CD8-positive, alpha-beta T cell (primary cell): ENCODE measurements at regions of chr3 and their contacts with region 1.

Region 1: GRCh38 chr3:44761424-44762169 is at the starts of genes KIAA1143 and KIF15:
- DNase-seq: peak; percentile 92 to 99 (median 98)
- ATAC-seq: peak; percentile 97
- H3K4me3 ChIP-seq: peak within 1 kb of the TSS; percentile 74 to 77
- H3K4me3 Mint-ChIP-seq: peak within 1 kb of the TSS; percentile 93
- H3K27ac ChIP-seq: peak within 1 kb of the TSS; percentile 78 to 81
- H3K27ac Mint-ChIP-seq: peak within 1 kb of the TSS; percentile 92
- H3K4me1 ChIP-seq: peaks cover 9% of the 10 kb centered on the region
- H3K4me1 Mint-ChIP-seq: peaks cover 40% of the 10 kb centered on the region
- H3K27me3 ChIP-seq: no peaks in the 10 kb centered on the region
- H3K27me3 Mint-ChIP-seq: peaks cover 3% of the 10 kb centered on the region
- CTCF ChIP-seq: no peak
- total RNA-seq, gene KIAA1143: 29.7 to 30.3 TPM
- total RNA-seq, gene KIF15: 0.24 to 0.64 TPM

Region 2: GRCh38 chr3:44477312-44478030 is 284.1 kb before region 1 on chr3 and contains the start of gene ZNF445:
- CTCF ChIA-PET with region 1: no interaction called
- POLR2A ChIA-PET with region 1: no interaction called
- intact Hi-C with region 1: loop called (anchors 1 to 10 kb)
- DNase-seq: peak; percentile 46 to 89 (median 73)
- ATAC-seq: peak; percentile 87
- H3K4me3 ChIP-seq: peak within 1 kb of the TSS; percentile 48 to 62
- H3K4me3 Mint-ChIP-seq: peak within 1 kb of the TSS; percentile 95
- H3K27ac ChIP-seq: peak within 1 kb of the TSS; percentile 8 to 16
- H3K27ac Mint-ChIP-seq: peak within 1 kb of the TSS; percentile 87
- H3K4me1 ChIP-seq: peaks cover 16% of the 10 kb centered on the region
- H3K4me1 Mint-ChIP-seq: peaks cover 42% of the 10 kb centered on the region
- H3K27me3 ChIP-seq: no peaks in the 10 kb centered on the region
- H3K27me3 Mint-ChIP-seq: no peaks in the 10 kb centered on the region
- CTCF ChIP-seq: no peak
- total RNA-seq, gene ZNF445: 4.8 to 5.2 TPM

Region 3: DNA sequence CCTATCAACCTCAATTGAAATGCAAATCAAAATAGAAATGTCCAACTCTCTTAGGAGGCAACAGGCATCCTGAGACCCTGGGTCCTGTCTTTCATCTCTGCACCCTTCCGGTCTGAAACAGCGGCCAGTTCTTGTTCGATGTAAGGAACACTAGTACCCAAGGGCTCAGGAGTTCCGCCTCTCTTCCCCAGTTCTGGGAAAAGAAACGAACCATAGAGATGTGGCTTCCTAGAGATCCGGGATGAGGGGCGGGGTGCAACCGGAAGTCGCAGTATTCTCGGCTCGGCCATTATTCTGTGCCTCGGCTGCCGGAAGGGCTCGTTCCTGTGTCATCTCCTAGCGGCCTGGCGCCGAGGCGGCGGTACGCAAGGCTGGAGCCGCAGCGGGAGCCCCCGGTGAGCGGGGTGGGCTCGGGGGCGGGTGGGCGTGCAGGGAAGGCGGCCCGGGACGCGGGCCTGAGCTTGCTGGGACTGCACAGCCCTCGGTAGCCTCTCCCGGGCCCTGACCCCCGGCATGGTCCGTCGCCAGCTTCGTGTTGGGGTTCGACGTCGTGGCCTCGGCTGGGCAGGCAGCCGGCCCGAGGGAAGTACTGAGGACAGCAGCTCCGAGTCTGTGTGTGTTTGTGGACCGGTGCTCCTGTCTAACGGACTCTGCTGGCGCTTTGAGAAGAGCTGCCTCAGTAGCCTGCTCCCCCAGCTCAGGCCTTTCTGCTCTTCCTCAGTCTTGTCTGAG is 136.7 kb before region 1 on chr3 and contains the start of gene ZNF197:
- CTCF ChIA-PET with region 1: no interaction called
- POLR2A ChIA-PET with region 1: interaction called, 5 read pairs
- intact Hi-C with region 1: loop called in 1 of 2 experiments (anchors 1 kb)
- DNase-seq: peak in 8 of 9 experiments; percentile 42 to 76 (median 55)
- ATAC-seq: peak; percentile 76
- H3K4me3 ChIP-seq: peak within 1 kb of the TSS; percentile 66 to 70
- H3K4me3 Mint-ChIP-seq: peak within 1 kb of the TSS; percentile 88
- H3K27ac ChIP-seq: peak within 1 kb of the TSS; percentile 49 to 60
- H3K27ac Mint-ChIP-seq: peak within 1 kb of the TSS; percentile 80
- H3K4me1 ChIP-seq: peaks cover 13% of the 10 kb centered on the region
- H3K4me1 Mint-ChIP-seq: peaks cover 46% of the 10 kb centered on the region
- H3K27me3 ChIP-seq: no peaks in the 10 kb centered on the region
- H3K27me3 Mint-ChIP-seq: no peaks in the 10 kb centered on the region
- CTCF ChIP-seq: no peak
- total RNA-seq, gene ZNF197: 2.9 to 3.5 TPM

Region 4: GRCh38 chr3:44729384-44729910 is 32.1 kb before region 1 on chr3 and contains the start of gene ZNF501:
- CTCF ChIA-PET with region 1: interaction called, 11 read pairs
- POLR2A ChIA-PET with region 1: interaction called, 18 read pairs
- intact Hi-C with region 1: loop called (anchors 1 kb)
- DNase-seq: peak; percentile 64 to 92 (median 87)
- ATAC-seq: peak; percentile 93
- H3K4me3 ChIP-seq: peak within 1 kb of the TSS; percentile 67 to 83
- H3K4me3 Mint-ChIP-seq: peak within 1 kb of the TSS; percentile 91
- H3K27ac ChIP-seq: peak within 1 kb of the TSS; percentile 41 to 62
- H3K27ac Mint-ChIP-seq: peak within 1 kb of the TSS; percentile 82
- H3K4me1 ChIP-seq: peaks cover 6% of the 10 kb centered on the region
- H3K4me1 Mint-ChIP-seq: peaks cover 14% of the 10 kb centered on the region
- H3K27me3 ChIP-seq: no peaks in the 10 kb centered on the region
- H3K27me3 Mint-ChIP-seq: no peaks in the 10 kb centered on the region
- CTCF ChIP-seq: no peak
- total RNA-seq, gene ZNF501: 0.75 to 0.87 TPM

Region 5: GRCh38 chr3:44893097-44893496 is 131.5 kb after region 1 on chr3:
- CTCF ChIA-PET with region 1: no interaction called
- POLR2A ChIA-PET with region 1: no interaction called
- intact Hi-C with region 1: no loop called
- DNase-seq: no peak
- ATAC-seq: no peak
- H3K4me3 ChIP-seq: no peak overlapping the region
- H3K4me3 Mint-ChIP-seq: no peak overlapping the region
- H3K27ac ChIP-seq: no peak overlapping the region
- H3K27ac Mint-ChIP-seq: no peak overlapping the region
- H3K4me1 ChIP-seq: no peaks in the 10 kb centered on the region
- H3K4me1 Mint-ChIP-seq: no peaks in the 10 kb centered on the region
- H3K27me3 ChIP-seq: no peaks in the 10 kb centered on the region
- H3K27me3 Mint-ChIP-seq: peaks cover 3% of the 10 kb centered on the region
- CTCF ChIP-seq: no peak

Region 6: DNA sequence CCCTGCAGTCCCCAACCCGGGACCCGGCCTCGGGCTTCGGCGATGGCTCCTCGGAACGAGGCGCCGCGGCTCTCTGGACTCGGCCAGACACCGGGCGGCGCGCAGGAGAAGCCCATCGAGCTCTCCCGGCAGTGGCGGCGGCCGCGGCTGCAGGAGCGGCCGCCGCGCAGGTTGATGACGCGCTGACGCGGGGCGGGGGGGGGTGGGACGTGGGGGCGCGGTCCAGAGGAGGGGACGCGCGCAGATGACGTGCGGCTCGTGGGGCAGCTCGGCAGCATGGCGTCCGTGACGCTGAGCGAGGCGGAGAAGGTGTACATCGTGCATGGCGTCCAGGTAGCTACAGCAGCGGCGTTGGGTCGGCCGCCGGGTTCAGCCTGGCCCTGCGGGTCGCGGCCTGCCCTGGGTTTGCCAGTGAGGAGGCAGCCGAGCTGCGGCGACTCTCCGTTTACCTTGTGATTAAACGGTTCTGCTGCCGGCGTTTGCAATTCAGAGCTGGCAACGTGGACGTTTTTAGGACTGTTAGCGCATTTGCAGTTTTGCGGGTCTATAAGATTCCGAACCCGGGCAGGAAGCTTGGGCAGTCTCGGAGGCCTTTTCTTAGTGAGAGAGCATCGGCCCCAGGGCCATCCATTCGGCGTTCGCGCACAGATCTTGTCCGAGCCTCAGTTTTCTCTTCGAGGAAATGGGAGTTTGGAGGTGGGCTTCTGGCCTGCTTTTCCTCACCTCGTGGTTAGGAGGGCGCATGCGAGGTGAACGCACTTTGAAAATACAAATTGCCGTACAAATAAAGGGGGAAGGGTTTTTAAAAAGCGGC is 214.6 kb after region 1 on chr3 and contains the starts of genes EXOSC7 and ZDHHC3:
- CTCF ChIA-PET with region 1: no interaction called
- POLR2A ChIA-PET with region 1: interaction called, 4 read pairs
- intact Hi-C with region 1: loop called (anchors 1 kb)
- DNase-seq: peak; percentile 75 to 95 (median 86)
- ATAC-seq: peak; percentile 97
- H3K4me3 ChIP-seq: peak within 1 kb of the TSS; percentile 97 to 99
- H3K4me3 Mint-ChIP-seq: peak within 1 kb of the TSS; percentile 93
- H3K27ac ChIP-seq: peak within 1 kb of the TSS; percentile 90 to 94
- H3K27ac Mint-ChIP-seq: peak within 1 kb of the TSS; percentile 95
- H3K4me1 ChIP-seq: peaks cover 37% of the 10 kb centered on the region
- H3K4me1 Mint-ChIP-seq: peaks cover 65% of the 10 kb centered on the region
- H3K27me3 ChIP-seq: no peaks in the 10 kb centered on the region
- H3K27me3 Mint-ChIP-seq: no peaks in the 10 kb centered on the region
- CTCF ChIP-seq: no peak
- total RNA-seq, gene EXOSC7: 35.2 to 39.3 TPM
- total RNA-seq, gene ZDHHC3: 42.2 to 42.4 TPM